B cell (primary cell): ENCODE measurements at regions of chr10 and their contacts with region 1.

Region 1: DNA sequence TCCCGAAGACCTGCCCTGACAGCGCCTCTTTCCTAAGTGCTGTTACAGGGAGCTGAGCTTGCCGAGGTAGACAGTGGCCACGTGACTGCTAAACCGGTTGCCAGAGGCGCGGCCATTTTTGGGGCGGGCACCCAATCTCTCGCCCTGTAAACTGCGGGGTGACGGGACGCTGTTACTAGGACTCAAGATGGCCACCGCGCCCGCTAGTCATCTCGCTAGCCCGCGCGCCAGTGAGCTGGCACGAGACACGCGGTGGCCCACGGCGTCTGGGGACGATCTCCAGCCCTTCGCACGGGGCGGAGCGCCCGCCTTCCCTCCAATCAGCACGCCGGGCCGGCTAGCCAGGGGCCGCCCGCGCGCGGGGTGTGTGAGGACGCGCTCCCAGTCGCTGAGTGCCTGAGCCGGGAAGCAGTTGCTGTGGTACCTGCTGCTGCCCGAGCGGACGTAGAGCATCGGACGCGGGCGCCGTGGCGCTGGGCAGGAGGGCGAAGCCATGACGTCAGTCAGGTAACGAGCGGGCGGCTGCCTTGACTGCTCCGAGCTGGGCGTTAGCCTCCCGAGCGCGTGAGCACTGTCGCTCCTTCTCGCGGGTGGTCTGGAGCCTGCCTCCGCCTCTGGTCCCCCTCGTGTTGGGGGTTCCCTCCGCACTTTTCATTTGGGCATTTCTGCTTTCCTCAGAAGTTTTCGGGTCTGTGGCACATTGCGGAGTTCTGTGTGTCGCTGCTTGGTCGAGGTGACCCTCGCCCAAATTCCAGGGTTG is 25.5 kb downstream of the ADK start:
- DNase-seq: peak; percentile 98
- ATAC-seq: peak; percentile 90
- H3K4me3 ChIP-seq: peak overlapping the region; percentile 85 to 96 (median 95)
- H3K4me3 Mint-ChIP-seq: peak overlapping the region; percentile 97
- H3K27ac ChIP-seq: peak overlapping the region; percentile 92 to 95
- H3K27ac Mint-ChIP-seq: peak overlapping the region; percentile 98
- H3K4me1 ChIP-seq: peaks cover 39 to 56% of the 10 kb centered on the region in 2 donors
- H3K4me1 Mint-ChIP-seq: peaks cover 55% of the 10 kb centered on the region
- H3K27me3 ChIP-seq: no peaks in the 10 kb centered on the region
- H3K27me3 Mint-ChIP-seq: no peaks in the 10 kb centered on the region
- CTCF ChIP-seq: no peak

Region 2: GRCh38 chr10:74165530-74165901 is 11.0 kb before region 1 on chr10:
- CTCF ChIA-PET with region 1: interaction called, 11 read pairs
- POLR2A ChIA-PET with region 1: interaction called, 17 read pairs
- intact Hi-C with region 1: loop called (anchors 1 kb)
- DNase-seq: no peak
- ATAC-seq: no peak
- H3K4me3 ChIP-seq: no peak overlapping the region
- H3K4me3 Mint-ChIP-seq: peak overlapping the region; percentile 35
- H3K27ac ChIP-seq: peak overlapping the region; percentile 23 to 80
- H3K27ac Mint-ChIP-seq: peak overlapping the region; percentile 66
- H3K4me1 ChIP-seq: peaks cover 73 to 81% of the 10 kb centered on the region in 2 donors
- H3K4me1 Mint-ChIP-seq: peaks cover 70% of the 10 kb centered on the region
- H3K27me3 ChIP-seq: no peaks in the 10 kb centered on the region
- H3K27me3 Mint-ChIP-seq: no peaks in the 10 kb centered on the region
- CTCF ChIP-seq: no peak

Region 3: GRCh38 chr10:74213571-74214162 is 37.1 kb after region 1 on chr10:
- CTCF ChIA-PET with region 1: interaction called, 11 read pairs
- POLR2A ChIA-PET with region 1: interaction called, 5 read pairs
- intact Hi-C with region 1: loop called (anchors 5 kb)
- DNase-seq: peak; percentile 70
- ATAC-seq: peak; percentile 62
- H3K4me3 ChIP-seq: no peak overlapping the region
- H3K4me3 Mint-ChIP-seq: no peak overlapping the region
- H3K27ac ChIP-seq: peak overlapping the region in 1 of 2 donors; percentile 69
- H3K27ac Mint-ChIP-seq: peak overlapping the region; percentile 39
- H3K4me1 ChIP-seq: peaks cover 6 to 10% of the 10 kb centered on the region in 2 donors
- H3K4me1 Mint-ChIP-seq: peaks cover 23% of the 10 kb centered on the region
- H3K27me3 ChIP-seq: no peaks in the 10 kb centered on the region
- H3K27me3 Mint-ChIP-seq: no peaks in the 10 kb centered on the region
- CTCF ChIP-seq: peak; percentile 68

Region 4: DNA sequence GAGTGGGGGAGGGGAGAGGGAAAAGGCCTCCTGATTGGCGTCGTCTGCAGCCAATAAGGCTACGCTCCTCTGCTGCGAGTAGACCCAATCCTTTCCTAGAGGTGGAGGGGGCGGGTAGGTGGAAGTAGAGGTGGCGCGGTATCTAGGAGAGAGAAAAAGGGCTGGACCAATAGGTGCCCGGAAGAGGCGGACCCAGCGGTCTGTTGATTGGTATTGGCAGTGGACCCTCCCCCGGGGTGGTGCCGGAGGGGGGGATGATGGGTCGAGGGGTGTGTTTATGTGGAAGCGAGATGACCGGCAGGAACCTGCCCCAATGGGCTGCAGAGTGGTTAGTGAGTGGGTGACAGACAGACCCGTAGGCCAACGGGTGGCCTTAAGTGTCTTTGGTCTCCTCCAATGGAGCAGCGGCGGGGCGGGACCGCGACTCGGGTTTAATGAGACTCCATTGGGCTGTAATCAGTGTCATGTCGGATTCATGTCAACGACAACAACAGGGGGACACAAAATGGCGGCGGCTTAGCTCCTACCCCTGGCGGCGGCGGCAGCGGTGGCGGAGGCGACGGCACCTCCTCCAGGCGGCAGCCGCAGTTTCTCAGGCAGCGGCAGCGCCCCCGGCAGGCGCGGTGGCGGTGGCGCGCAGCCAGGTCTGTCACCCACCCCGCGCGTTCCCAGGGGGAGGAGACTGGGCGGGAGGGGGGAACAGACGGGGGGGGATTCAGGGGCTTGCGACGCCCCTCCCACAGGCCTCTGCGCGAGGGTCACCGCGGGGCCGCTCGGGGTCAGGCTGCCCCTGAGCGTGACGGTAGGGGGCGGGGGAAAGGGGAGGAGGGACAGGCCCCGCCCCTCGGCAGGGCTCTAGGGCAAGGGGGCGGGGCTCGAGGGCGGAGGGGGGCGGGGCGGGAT is 649.8 kb after region 1 on chr10 and contains the start of gene KAT6B:
- CTCF ChIA-PET with region 1: no interaction called
- POLR2A ChIA-PET with region 1: no interaction called
- intact Hi-C with region 1: loop called (anchors 1 kb)
- DNase-seq: peak; percentile 100
- ATAC-seq: peak; percentile 75
- H3K4me3 ChIP-seq: peak within 1 kb of the TSS; percentile 81 to 99 (median 90)
- H3K4me3 Mint-ChIP-seq: peak within 1 kb of the TSS; percentile 93
- H3K27ac ChIP-seq: peak within 1 kb of the TSS; percentile 91 to 99
- H3K27ac Mint-ChIP-seq: peak within 1 kb of the TSS; percentile 97
- H3K4me1 ChIP-seq: peaks cover 30 to 38% of the 10 kb centered on the region in 2 donors
- H3K4me1 Mint-ChIP-seq: peaks cover 42% of the 10 kb centered on the region
- H3K27me3 ChIP-seq: no peaks in the 10 kb centered on the region
- H3K27me3 Mint-ChIP-seq: no peaks in the 10 kb centered on the region
- CTCF ChIP-seq: peak; percentile 39
- total RNA-seq, gene KAT6B: 111 and 119 TPM in 2 replicates